PC-3 (cell line): ENCODE measurements at regions of chr11 and their contacts with region 1.

Region 1: GRCh38 chr11:12117200-12117599 is 6.8 kb downstream of the MICAL2 start:
- DNase-seq: no peak
- ATAC-seq: no peak
- H3K4me3 ChIP-seq: no peak overlapping the region
- H3K27ac ChIP-seq: no peak overlapping the region
- H3K4me1 ChIP-seq: peaks cover 33% of the 10 kb centered on the region
- H3K27me3 ChIP-seq: no peaks in the 10 kb centered on the region
- CTCF ChIP-seq: no peak

Region 2: GRCh38 chr11:12019337-12019736 is 97.9 kb before region 1 on chr11:
- CTCF ChIA-PET with region 1: no interaction called
- POLR2A ChIA-PET with region 1: no interaction called
- intact Hi-C with region 1: no loop called
- DNase-seq: no peak
- ATAC-seq: no peak
- H3K4me3 ChIP-seq: no peak overlapping the region
- H3K27ac ChIP-seq: no peak overlapping the region
- H3K4me1 ChIP-seq: no peaks in the 10 kb centered on the region
- H3K27me3 ChIP-seq: no peaks in the 10 kb centered on the region
- CTCF ChIP-seq: no peak

Region 3: GRCh38 chr11:12079726-12080556 is 37.3 kb before region 1 on chr11:
- CTCF ChIA-PET with region 1: no interaction called
- POLR2A ChIA-PET with region 1: interaction called, 17 read pairs
- intact Hi-C with region 1: no loop called
- DNase-seq: peak; percentile 96
- ATAC-seq: peak; percentile 89
- H3K4me3 ChIP-seq: no peak overlapping the region
- H3K27ac ChIP-seq: peak overlapping the region; percentile 97
- H3K4me1 ChIP-seq: peaks cover 30% of the 10 kb centered on the region
- H3K27me3 ChIP-seq: no peaks in the 10 kb centered on the region
- CTCF ChIP-seq: no peak